Activated B cell treated with CpG ODN at 0.5 μM for 24 hours (primary cell): ENCODE measurements at regions of chr6 and their contacts with region 1.

Region 1: GRCh38 chr6:710601-711571 is 17.9 kb upstream of the EXOC2 start:
- DNase-seq: peak; percentile 55
- ATAC-seq: peak; percentile 85
- H3K4me3 Mint-ChIP-seq: peak overlapping the region; percentile 96
- H3K27ac Mint-ChIP-seq: peak overlapping the region; percentile 97
- H3K4me1 Mint-ChIP-seq: peaks cover 17% of the 10 kb centered on the region
- H3K27me3 Mint-ChIP-seq: peaks cover 4% of the 10 kb centered on the region
- CTCF ChIP-seq: no peak

Region 2: DNA sequence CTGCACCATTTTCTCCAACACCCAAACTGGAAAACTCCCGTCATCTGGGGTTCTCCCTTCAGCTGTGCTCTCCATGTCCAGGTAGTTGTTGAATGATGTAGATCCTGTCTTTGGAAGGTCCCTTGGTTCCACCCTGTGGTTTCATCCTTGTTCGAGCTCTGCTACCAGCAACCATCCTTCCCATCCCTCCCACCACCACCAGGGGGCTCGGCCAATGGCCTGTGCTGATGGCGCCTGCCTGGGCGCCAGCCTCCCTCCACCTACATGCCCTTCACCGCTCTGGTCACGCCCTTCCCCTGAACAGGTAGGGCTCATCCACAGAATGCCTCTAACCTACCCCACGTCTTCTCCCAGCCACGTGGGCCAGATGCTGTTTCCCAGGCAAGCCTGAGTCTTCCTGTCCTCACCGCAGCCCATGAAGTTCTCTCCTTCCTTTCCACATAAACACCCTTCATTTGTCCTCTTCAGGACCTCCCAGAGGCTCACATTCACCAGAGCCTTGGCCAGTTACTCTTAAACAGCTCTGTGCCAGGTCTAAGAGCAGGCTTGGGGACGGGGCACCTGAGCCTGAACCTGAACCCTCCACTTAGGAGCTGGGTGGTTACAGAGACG is 493.7 kb before region 1 on chr6:
- CTCF ChIA-PET with region 1: no interaction called
- POLR2A ChIA-PET with region 1: no interaction called
- intact Hi-C with region 1: loop called (anchors 10 kb)
- DNase-seq: no peak
- ATAC-seq: no peak
- H3K4me3 Mint-ChIP-seq: peak overlapping the region; percentile 61
- H3K27ac Mint-ChIP-seq: peak overlapping the region; percentile 90
- H3K4me1 Mint-ChIP-seq: peaks cover 81% of the 10 kb centered on the region
- H3K27me3 Mint-ChIP-seq: no peaks in the 10 kb centered on the region
- CTCF ChIP-seq: no peak

Region 3: GRCh38 chr6:624979-625378 is 85.9 kb before region 1 on chr6:
- CTCF ChIA-PET with region 1: no interaction called
- POLR2A ChIA-PET with region 1: no interaction called
- intact Hi-C with region 1: loop called (anchors 5 kb)
- DNase-seq: no peak
- ATAC-seq: no peak
- H3K4me3 Mint-ChIP-seq: no peak overlapping the region
- H3K27ac Mint-ChIP-seq: no peak overlapping the region
- H3K4me1 Mint-ChIP-seq: peaks cover 15% of the 10 kb centered on the region
- H3K27me3 Mint-ChIP-seq: no peaks in the 10 kb centered on the region
- CTCF ChIP-seq: no peak

Region 4: DNA sequence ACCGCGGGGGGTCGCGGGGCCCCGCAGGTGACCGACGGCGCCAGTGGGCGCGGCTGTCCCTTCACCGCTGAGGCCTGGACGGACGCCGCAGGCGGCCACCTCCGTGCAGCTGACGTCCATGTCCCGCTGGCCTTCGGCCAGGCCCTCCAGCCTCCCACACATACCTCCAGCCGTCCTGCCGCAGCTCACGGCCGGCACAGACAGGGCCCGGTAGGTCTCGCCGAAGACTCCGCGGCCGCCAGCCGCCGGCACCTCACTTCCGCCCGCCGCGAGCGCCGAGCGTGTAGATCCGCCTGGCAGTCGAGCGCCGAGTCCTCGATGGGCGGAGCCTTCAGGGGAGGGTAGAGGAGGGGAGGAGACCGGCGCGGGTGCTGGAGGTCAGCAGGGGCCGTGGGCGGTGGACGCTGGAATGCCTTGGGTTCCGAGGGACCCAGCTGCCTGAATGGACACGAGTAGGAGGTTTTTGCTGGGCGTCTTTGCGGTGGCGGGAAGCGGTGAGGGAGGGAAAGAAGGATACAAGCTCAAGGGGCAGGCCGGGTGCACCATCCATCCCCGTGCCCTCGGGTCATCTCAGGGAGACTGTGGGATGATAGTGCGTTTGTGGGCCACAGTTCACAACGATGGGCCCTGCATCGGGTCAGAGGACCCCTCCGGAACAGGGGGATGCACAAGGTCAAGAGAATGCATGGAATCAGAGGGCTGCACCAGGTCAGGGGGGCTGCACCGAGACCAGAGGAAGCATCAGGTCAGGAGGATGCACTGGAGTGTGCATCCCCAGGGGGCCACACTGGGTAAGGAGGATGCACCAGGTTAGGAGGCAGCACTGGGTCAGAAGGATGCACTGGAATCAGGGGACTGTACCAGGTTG is 17.8 kb before region 1 on chr6 and contains the start of gene EXOC2:
- CTCF ChIA-PET with region 1: interaction called, 3 read pairs
- POLR2A ChIA-PET with region 1: interaction called, 22 read pairs
- intact Hi-C with region 1: loop called (anchors 1 kb)
- DNase-seq: peak; percentile 82
- ATAC-seq: peak; percentile 85
- H3K4me3 Mint-ChIP-seq: peak within 1 kb of the TSS; percentile 96
- H3K27ac Mint-ChIP-seq: peak within 1 kb of the TSS; percentile 85
- H3K4me1 Mint-ChIP-seq: peaks cover 30% of the 10 kb centered on the region
- H3K27me3 Mint-ChIP-seq: no peaks in the 10 kb centered on the region
- CTCF ChIP-seq: no peak
- total RNA-seq, gene EXOC2: 29.8 and 30.8 TPM in 2 replicates

Region 5: DNA sequence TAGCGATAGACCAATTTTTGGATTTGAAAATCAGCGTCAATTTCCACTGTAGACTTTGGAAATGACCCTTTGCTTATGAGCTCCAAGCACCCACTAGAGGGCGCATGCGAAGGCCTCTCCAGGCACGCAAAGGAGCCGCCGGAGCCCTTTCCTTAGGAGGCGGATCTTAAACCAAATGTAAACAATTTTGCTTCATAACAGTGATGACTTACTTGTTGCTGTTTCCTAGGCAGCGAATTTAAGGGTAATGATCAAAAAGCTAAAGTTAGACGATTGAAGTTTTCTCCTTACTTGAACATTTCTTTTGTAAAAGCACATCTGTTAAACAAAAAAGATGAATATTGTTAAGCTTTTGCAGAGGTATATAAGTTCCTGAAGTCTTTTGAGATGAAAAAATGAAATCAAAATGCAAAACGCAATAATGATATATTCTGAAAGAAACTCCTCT is 11.2 kb after region 1 on chr6:
- CTCF ChIA-PET with region 1: interaction called, 12 read pairs
- POLR2A ChIA-PET with region 1: interaction called, 3 read pairs
- intact Hi-C with region 1: no loop called
- DNase-seq: peak; percentile 40
- ATAC-seq: peak; percentile 50
- H3K4me3 Mint-ChIP-seq: no peak overlapping the region
- H3K27ac Mint-ChIP-seq: no peak overlapping the region
- H3K4me1 Mint-ChIP-seq: peaks cover 4% of the 10 kb centered on the region
- H3K27me3 Mint-ChIP-seq: peaks cover 12% of the 10 kb centered on the region
- CTCF ChIP-seq: peak; percentile 86

Region 6: DNA sequence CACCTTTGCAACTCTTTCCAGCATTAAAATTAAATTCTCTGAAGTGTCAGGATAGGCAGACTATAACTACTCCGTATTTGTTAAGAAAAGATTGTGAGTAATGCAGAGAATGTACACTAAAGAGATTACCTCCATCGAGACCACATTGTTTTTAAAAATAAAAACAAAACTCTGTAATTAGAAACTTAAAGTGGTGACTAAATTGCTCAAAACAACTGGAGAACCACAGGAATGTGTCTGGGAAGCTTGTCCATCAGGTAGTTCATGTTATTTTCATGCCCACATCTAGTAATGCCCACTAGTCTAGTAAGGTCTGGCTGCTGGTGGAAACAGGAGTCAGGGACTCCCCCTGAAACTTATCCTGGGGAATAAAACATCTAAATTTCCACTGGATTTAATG is 498.0 kb after region 1 on chr6:
- CTCF ChIA-PET with region 1: no interaction called
- POLR2A ChIA-PET with region 1: no interaction called
- intact Hi-C with region 1: no loop called
- DNase-seq: no peak
- ATAC-seq: no peak
- H3K4me3 Mint-ChIP-seq: no peak overlapping the region
- H3K27ac Mint-ChIP-seq: no peak overlapping the region
- H3K4me1 Mint-ChIP-seq: no peaks in the 10 kb centered on the region
- H3K27me3 Mint-ChIP-seq: peaks cover 16% of the 10 kb centered on the region
- CTCF ChIP-seq: no peak